PC-9 (cell line): ENCODE measurements at regions of chr16 and their contacts with region 1.

Region 1: GRCh38 chr16:13307255-13307654 is 405.9 kb downstream of the SHISA9 start:
- DNase-seq: peak; percentile 86 to 99
- H3K4me3 ChIP-seq: no peak overlapping the region
- H3K27ac ChIP-seq: peak overlapping the region; percentile 88
- H3K4me1 ChIP-seq: peaks cover 44% of the 10 kb centered on the region
- H3K27me3 ChIP-seq: no peaks in the 10 kb centered on the region
- CTCF ChIP-seq: no peak

Region 2: GRCh38 chr16:12613131-12613991 is 693.9 kb before region 1 on chr16:
- CTCF ChIA-PET with region 1: no interaction called
- POLR2A ChIA-PET with region 1: no interaction called
- intact Hi-C with region 1: loop called (anchors 1 kb)
- DNase-seq: peak; percentile 89 to 97
- H3K4me3 ChIP-seq: peak overlapping the region; percentile 46; the same call in 1 of the 2 replicates
- H3K27ac ChIP-seq: peak overlapping the region; percentile 100
- H3K4me1 ChIP-seq: peaks cover 55% of the 10 kb centered on the region
- H3K27me3 ChIP-seq: no peaks in the 10 kb centered on the region
- CTCF ChIP-seq: no peak

Region 3: DNA sequence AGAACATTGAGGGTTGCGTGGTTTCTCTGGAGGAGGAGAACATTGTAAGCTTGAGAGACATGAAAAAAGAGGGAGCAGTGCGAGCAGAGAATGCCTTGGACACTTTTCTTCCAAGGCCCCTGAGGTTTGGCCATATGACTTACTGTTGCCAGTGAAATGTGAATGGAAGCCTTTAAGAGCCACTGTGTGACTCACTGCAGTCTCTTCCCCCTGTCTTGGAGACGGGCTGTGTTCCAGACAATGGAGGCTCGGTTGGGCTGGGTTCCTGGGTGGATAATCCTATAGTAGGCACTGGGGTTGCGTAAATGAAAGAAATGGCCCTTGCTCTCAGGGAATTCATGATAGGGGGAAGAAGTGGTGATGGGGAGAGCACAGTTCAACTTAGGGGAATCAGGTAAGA is 330.3 kb before region 1 on chr16:
- CTCF ChIA-PET with region 1: no interaction called
- POLR2A ChIA-PET with region 1: no interaction called
- intact Hi-C with region 1: loop called (anchors 5 kb)
- DNase-seq: peak in 1 of 2 experiments; percentile 63
- H3K4me3 ChIP-seq: no peak overlapping the region
- H3K27ac ChIP-seq: peak overlapping the region; percentile 49
- H3K4me1 ChIP-seq: peaks cover 24% of the 10 kb centered on the region
- H3K27me3 ChIP-seq: no peaks in the 10 kb centered on the region
- CTCF ChIP-seq: no peak

Region 4: GRCh38 chr16:13231365-13231764 is 75.9 kb before region 1 on chr16:
- CTCF ChIA-PET with region 1: no interaction called
- POLR2A ChIA-PET with region 1: no interaction called
- intact Hi-C with region 1: loop called (anchors 1 kb)
- DNase-seq: no peak
- H3K4me3 ChIP-seq: no peak overlapping the region
- H3K27ac ChIP-seq: no peak overlapping the region
- H3K4me1 ChIP-seq: no peaks in the 10 kb centered on the region
- H3K27me3 ChIP-seq: no peaks in the 10 kb centered on the region
- CTCF ChIP-seq: no peak

Region 5: DNA sequence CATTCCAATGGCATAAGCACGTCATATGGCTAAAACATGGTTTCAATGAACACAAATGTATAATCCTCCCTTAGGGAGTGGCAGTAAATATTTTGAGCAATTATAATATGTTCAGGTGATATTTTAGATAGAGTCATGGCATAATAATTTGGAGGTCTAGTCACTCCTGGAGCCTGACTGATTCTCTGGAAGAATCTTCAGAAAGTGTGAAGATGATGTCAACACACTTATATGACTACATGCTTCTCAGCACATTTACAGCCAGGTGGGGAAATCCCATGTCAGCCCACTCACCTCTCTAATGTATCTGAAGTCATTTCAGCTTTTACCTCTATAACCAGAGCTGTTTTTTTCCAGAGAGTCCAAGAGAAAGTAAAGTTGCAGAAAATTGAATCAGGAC is 68.9 kb after region 1 on chr16:
- CTCF ChIA-PET with region 1: no interaction called
- POLR2A ChIA-PET with region 1: no interaction called
- intact Hi-C with region 1: no loop called
- DNase-seq: no peak
- H3K4me3 ChIP-seq: no peak overlapping the region
- H3K27ac ChIP-seq: no peak overlapping the region
- H3K4me1 ChIP-seq: peaks cover 10% of the 10 kb centered on the region
- H3K27me3 ChIP-seq: no peaks in the 10 kb centered on the region
- CTCF ChIP-seq: no peak

Region 6: DNA sequence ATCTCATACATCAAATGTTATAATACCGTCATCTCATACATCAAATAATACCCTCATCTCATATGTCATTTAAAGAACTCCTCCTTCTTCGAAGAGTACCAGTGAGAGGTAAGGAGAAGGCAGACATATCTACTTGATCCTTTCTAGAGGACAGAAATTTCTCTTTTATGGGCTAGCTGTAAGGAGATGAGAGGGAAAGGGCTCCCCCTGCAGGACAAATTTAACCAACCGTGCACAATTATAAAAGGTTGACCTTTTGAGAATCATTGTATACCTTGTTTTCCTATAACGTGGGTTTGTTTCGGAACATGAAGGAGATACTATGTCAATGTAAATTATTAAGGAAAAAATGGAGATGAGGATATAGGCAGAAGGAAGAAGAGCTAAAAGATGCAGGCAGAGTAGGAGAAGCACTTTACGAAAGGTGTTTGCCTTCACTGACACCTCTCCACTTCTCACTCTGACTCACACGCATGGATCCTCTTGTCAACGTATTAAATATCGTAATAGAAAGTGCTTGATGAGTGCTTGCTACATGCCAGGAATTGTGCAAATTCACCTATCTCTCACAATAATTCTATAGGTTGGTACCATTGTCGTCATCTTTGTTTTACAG is 146.8 kb after region 1 on chr16:
- CTCF ChIA-PET with region 1: no interaction called
- POLR2A ChIA-PET with region 1: no interaction called
- intact Hi-C with region 1: loop called (anchors 1 kb)
- DNase-seq: peak in 1 of 2 experiments; percentile 56
- H3K4me3 ChIP-seq: no peak overlapping the region
- H3K27ac ChIP-seq: no peak overlapping the region
- H3K4me1 ChIP-seq: no peaks in the 10 kb centered on the region
- H3K27me3 ChIP-seq: no peaks in the 10 kb centered on the region
- CTCF ChIP-seq: peak; percentile 90